ENCODE measurements at regions of chr11 and their contacts with region 1.

Region 1: DNA sequence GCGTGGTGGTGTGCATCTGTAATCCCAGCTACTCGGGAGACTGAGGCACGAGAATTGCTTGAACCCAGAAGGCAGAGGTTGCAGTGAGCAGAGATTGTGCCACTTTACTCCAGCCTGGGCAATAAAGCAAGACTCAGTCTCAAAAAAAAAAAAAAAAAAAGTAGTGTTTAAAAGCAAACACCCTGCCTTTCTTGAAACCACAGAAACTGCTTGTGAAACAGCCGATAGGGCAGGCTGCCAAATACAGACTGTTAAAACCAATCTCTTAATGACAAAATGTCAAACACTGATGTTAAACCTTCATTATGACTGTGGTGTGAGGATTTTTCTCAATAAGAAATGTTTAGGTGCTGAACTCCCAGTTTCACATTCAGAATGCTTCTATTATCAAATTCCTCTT is 27.3 kb downstream of the MARK2 start:
- DNase-seq: peak; percentile 91
- H3K4me3 Mint-ChIP-seq: peak overlapping the region; percentile 23
- H3K27ac Mint-ChIP-seq: peak overlapping the region; percentile 67
- H3K4me1 Mint-ChIP-seq: peaks cover 75% of the 10 kb centered on the region
- H3K27me3 Mint-ChIP-seq: no peaks in the 10 kb centered on the region

Region 2: GRCh38 chr11:63851364-63851763 is 14.8 kb before region 1 on chr11:
- CTCF ChIA-PET with region 1: no interaction called
- POLR2A ChIA-PET with region 1: interaction called, 4 read pairs
- intact Hi-C with region 1: loop called (anchors 2 kb)
- DNase-seq: no peak
- H3K4me3 Mint-ChIP-seq: peak overlapping the region; percentile 9
- H3K27ac Mint-ChIP-seq: peak overlapping the region; percentile 24
- H3K4me1 Mint-ChIP-seq: peaks cover 68% of the 10 kb centered on the region
- H3K27me3 Mint-ChIP-seq: no peaks in the 10 kb centered on the region

Region 3: DNA sequence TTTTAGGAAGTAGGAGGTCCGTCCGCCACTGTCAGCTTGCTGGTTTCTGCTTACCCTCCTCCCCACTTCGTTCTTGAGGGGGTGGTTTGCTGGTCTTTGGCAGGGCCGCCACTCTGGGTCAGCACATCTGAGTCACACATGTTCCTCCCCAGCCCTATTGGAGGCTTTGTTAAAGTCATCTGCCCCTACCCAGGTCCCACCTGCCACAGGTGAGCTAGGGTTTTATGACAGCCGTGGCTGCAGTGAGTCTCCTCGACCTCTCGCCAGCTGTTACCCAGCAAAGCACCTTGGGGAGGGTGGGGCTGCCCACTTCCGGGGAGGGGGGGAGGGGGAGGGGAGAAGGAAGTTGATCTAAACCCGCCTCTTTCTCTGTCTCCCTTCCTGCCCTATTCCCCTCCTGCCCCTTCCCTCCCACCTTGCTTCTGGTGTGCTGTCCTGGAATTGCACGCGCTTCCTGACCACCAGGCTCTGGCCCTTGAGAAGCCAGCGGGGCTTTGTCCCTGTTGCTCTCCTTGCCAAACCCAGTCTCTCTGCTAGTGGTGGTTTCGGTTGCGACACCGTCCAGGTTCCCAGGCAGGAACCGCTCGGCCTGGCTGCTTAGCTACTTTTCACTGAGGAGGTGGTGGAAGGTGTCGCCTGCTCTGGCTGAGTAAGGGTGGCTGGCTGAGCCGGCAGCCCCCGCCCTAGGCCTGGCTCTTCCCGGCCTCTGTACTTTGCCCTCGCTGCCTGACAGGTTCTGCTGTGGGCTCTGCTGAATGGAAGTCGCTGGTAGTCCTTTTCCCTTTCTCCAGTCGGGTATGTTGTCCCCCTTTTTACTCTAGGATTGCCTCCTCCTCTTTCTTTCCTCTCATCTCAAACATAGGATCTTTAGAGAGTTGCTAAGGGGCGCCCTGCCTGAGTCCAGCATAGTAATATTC is 22.2 kb after region 1 on chr11:
- CTCF ChIA-PET with region 1: interaction called, 3 read pairs
- POLR2A ChIA-PET with region 1: interaction called, 4 read pairs
- intact Hi-C with region 1: loop called (anchors 2 kb)
- DNase-seq: peak; percentile 80
- H3K4me3 Mint-ChIP-seq: peak overlapping the region; percentile 81
- H3K27ac Mint-ChIP-seq: peak overlapping the region; percentile 85
- H3K4me1 Mint-ChIP-seq: peaks cover 70% of the 10 kb centered on the region
- H3K27me3 Mint-ChIP-seq: no peaks in the 10 kb centered on the region

Measured in activated CD4-positive, alpha-beta memory T cell treated with anti-CD3 and anti-CD28 coated beads for 36 hours (primary cell).